Activated T-helper 1 cell treated with anti-CD3 and anti-CD28 coated beads, Interleukin-12 subunit alpha, Interleukin-12 subunit beta, Interleukin-2, Interleukin-4 antibody, amounts not matched to agents 30 ng/mL and 10 ng/mL and 1 ng/mL, durations not matched to agents 14 hours and 24 hours and 36 hours (primary cell): ENCODE measurements at regions of chr16 and their contacts with region 1.

Region 1: GRCh38 chr16:10944249-10945064 is at the start of gene CLEC16A:
- DNase-seq: peak; percentile 97
- H3K4me3 Mint-ChIP-seq: peak within 1 kb of the TSS; percentile 91
- H3K27ac Mint-ChIP-seq: peak within 1 kb of the TSS; percentile 80
- H3K4me1 Mint-ChIP-seq: peaks cover 56% of the 10 kb centered on the region
- H3K27me3 Mint-ChIP-seq: no peaks in the 10 kb centered on the region
- total RNA-seq, gene CLEC16A: 36.3 and 37.4 TPM in 2 replicates

Region 2: DNA sequence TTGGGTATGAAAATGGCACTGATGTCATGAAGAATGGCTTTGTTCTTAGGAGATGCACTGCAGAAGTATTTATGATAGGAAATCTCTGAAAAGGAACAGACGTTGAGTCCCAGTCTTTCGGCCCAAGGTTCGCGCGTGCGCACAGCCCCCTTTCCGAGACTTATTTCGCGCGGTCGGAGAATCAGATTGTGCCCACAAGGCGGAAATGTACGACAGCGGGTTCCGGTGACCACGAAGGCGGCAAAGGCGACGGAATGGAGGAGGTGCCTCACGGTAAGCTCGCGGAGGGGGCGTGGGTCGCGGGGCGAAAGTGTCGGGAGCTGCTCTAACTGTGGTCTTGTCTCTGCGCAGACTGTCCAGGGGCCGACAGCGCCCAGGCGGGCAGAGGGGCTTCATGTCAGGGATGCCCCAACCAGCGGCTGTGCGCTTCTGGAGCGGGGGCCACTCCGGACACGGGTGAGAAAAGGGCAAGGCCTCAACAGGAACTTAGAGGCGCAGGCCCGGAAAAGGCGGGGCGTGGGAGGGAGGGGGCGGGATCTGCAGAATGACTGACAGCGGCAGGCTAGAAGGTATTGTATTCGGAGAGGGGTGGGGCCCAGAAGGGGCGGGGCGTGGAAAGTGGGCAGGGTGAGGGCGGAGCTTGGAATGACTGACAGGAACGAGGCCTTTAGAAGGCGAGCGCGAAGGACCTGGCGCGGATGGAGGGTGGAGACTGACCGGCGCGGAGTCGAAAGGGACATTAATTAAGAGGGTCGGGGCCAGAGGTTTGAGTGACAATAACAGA is 200.7 kb before region 1 on chr16 and contains the start of gene NUBP1:
- intact Hi-C with region 1: loop called (anchors 1 kb)
- DNase-seq: peak; percentile 97
- H3K4me3 Mint-ChIP-seq: peak within 1 kb of the TSS; percentile 87
- H3K27ac Mint-ChIP-seq: peak within 1 kb of the TSS; percentile 93
- H3K4me1 Mint-ChIP-seq: peaks cover 57% of the 10 kb centered on the region
- H3K27me3 Mint-ChIP-seq: no peaks in the 10 kb centered on the region
- total RNA-seq, gene NUBP1: 39.8 and 42.4 TPM in 2 replicates

Region 3: GRCh38 chr16:11345040-11345862 is 400.8 kb after region 1 on chr16 and contains the start of gene RMI2:
- intact Hi-C with region 1: loop called (anchors 1 kb)
- DNase-seq: peak; percentile 97
- H3K4me3 Mint-ChIP-seq: peak within 1 kb of the TSS; percentile 93
- H3K27ac Mint-ChIP-seq: peak within 1 kb of the TSS; percentile 83
- H3K4me1 Mint-ChIP-seq: peaks cover 58% of the 10 kb centered on the region
- H3K27me3 Mint-ChIP-seq: peaks cover 4% of the 10 kb centered on the region
- total RNA-seq, gene RMI2: 49.8 and 55.7 TPM in 2 replicates

Region 4: DNA sequence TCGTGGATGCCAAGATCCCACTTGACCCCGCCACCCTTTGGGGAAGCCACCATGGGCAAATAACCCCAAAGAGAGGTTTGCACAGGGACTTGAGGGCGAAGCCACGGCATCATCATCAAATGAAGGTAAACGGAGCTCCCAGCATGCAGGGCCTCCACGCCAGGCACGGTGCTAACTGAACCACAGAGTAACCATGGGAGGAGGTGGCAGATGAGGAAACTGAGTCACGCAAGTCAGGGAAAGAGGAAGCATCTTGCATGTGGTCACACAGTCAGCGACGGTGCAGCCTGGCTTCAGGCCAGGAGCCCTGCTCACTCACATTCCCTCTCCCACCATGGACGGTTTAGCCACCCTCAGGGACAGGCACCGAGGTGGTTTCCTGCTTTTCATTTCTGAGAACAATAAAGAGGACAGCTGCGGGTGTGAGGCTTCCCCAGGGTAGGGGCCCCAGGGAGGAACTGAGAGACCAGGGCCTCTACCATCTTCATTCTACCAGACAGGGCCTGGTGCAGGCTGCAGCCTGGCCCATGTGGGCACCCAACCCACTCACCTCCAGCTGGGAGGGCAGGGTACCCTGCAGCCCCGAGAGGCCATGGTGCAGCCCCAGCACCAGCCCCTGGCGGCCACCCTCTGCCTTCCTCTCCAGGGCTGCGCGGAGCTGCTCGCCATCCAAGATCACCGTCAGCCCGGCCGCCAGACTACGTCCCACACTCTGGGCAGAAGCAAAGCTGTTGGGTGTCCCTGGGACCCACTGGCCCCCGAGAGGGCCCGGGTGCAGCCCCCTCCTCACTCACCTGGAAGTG is 479.1 kb after region 1 on chr16:
- intact Hi-C with region 1: no loop called
- DNase-seq: no peak
- H3K4me3 Mint-ChIP-seq: no peak overlapping the region
- H3K27ac Mint-ChIP-seq: no peak overlapping the region
- H3K4me1 Mint-ChIP-seq: peaks cover 6% of the 10 kb centered on the region
- H3K27me3 Mint-ChIP-seq: peaks cover 1% of the 10 kb centered on the region

Region 5: GRCh38 chr16:11742539-11743307 is 798.3 kb after region 1 on chr16 and contains the start of gene TXNDC11:
- intact Hi-C with region 1: loop called (anchors 1 kb)
- DNase-seq: peak; percentile 99
- H3K4me3 Mint-ChIP-seq: peak within 1 kb of the TSS; percentile 99
- H3K27ac Mint-ChIP-seq: peak within 1 kb of the TSS; percentile 93
- H3K4me1 Mint-ChIP-seq: peaks cover 54% of the 10 kb centered on the region
- H3K27me3 Mint-ChIP-seq: no peaks in the 10 kb centered on the region
- total RNA-seq, gene TXNDC11: 52.7 and 55.9 TPM in 2 replicates

Region 6: GRCh38 chr16:11851294-11852091 is 907.0 kb after region 1 on chr16 and contains the start of gene RSL1D1:
- intact Hi-C with region 1: loop called (anchors 1 kb)
- DNase-seq: peak; percentile 95
- H3K4me3 Mint-ChIP-seq: peak within 1 kb of the TSS; percentile 99
- H3K27ac Mint-ChIP-seq: peak within 1 kb of the TSS; percentile 97
- H3K4me1 Mint-ChIP-seq: peaks cover 44% of the 10 kb centered on the region
- H3K27me3 Mint-ChIP-seq: no peaks in the 10 kb centered on the region
- total RNA-seq, gene RSL1D1: 345 and 369 TPM in 2 replicates

Region 7: DNA sequence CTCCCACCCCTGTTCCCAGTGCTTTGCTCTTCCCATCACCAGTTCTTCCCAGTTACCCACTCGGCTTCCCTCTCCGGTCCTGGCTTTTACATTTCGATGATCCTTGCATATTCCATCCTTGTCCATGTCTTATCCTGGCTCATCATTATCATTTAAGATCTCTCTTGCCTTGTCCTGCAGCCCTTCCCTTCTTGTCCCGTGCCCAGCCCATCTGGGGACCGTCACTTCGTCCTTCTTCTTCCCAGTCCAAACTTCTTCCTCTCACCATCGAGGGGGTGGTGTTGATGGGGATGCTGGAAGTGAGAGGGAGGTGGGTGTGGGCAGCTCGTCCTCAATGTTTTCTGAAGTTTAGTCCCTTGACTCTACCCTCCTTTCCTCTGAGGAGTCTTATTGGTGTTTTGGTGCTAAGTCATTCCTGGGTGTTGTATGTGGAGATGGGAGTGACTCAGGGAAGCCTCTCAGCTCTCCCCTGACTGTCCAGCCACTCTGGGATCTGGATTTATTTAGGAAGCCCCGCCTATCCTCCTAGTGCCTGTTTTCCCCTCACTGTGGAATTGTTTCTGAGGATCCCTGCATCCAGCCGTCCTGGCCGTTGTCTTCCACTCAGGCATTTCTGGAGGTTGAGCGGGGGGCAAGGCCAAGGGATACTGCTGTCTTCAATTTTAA is 1033.1 kb after region 1 on chr16:
- intact Hi-C with region 1: loop called (anchors 10 kb)
- DNase-seq: no peak
- H3K4me3 Mint-ChIP-seq: peak overlapping the region; percentile 96
- H3K27ac Mint-ChIP-seq: peak overlapping the region; percentile 84
- H3K4me1 Mint-ChIP-seq: peaks cover 30% of the 10 kb centered on the region
- H3K27me3 Mint-ChIP-seq: peaks cover 2% of the 10 kb centered on the region